ENCODE measurements at regions of chr17 and their contacts with region 1.

Region 1: DNA sequence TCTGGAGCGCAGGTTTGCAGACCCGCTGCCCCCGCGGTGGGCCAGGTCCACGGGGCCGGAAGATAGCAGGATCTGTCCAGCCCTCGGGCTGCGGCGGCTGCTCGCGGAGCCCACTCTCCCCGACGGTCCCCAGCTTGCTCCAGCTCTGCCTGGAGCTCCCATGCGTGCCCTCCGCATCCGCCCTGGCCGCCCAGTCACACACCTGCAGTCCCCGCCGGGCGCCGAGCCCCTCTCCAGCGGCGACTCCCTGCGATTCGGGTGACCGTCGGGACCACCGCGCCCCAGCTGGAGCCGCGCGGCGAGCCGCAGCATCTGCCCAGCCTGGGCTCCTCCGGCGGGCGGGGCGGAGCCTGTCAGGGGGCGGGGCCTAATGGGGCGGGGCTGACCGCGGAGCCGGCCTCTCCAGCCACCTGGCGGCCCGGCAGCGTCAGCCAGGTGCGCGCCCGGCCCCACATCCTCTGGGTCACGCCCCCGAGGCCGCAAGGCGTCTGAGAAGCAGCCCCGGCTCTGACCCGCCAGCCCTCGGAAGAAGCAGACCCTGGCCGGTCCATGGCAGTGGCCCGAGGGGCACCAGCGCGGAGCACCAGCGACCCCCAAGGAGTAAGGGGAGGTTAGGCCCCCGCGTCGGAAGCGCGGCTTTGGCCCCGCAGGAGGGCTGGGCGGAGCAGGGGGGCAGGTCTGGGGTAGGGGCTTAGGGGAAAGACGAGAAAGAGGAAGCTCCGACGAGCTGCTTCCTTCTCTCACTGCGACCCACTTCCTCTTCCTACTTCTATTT is at the start of gene PIK3R5:
- DNase-seq: peak; percentile 91
- H3K4me3 Mint-ChIP-seq: peak within 1 kb of the TSS; percentile 93
- H3K27ac Mint-ChIP-seq: peak within 1 kb of the TSS; percentile 96
- H3K4me1 Mint-ChIP-seq: peaks cover 49% of the 10 kb centered on the region
- H3K27me3 Mint-ChIP-seq: no peaks in the 10 kb centered on the region
- total RNA-seq, gene PIK3R5: 32.6 and 36.8 TPM in 2 replicates

Region 2: DNA sequence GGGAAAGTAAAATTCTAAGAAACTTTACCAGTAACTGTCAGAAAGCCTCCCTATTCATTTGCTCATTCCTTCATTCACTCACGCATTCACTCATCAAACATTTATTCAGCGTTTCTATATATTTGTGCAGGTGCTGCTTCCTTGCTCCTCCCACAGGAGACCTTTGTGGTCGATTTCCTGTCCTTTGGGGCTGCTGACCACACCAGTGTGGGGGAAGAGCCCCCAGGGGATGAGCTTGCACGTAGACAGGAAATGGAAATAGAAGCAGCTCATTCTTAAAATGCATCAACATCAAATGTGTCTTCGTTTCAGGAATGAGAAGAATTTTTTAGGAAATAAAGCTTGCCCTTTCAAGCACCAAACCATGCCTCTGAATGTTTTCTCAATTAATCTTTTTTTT is 107.7 kb before region 1 on chr17:
- intact Hi-C with region 1: loop called (anchors 2 kb)
- DNase-seq: peak; percentile 87
- H3K4me3 Mint-ChIP-seq: peak overlapping the region; percentile 67
- H3K27ac Mint-ChIP-seq: peak overlapping the region; percentile 91
- H3K4me1 Mint-ChIP-seq: peaks cover 56% of the 10 kb centered on the region
- H3K27me3 Mint-ChIP-seq: no peaks in the 10 kb centered on the region

Region 3: GRCh38 chr17:8880476-8881036 is 85.0 kb before region 1 on chr17:
- intact Hi-C with region 1: no loop called
- DNase-seq: no peak
- H3K4me3 Mint-ChIP-seq: no peak overlapping the region
- H3K27ac Mint-ChIP-seq: no peak overlapping the region
- H3K4me1 Mint-ChIP-seq: peaks cover 2% of the 10 kb centered on the region
- H3K27me3 Mint-ChIP-seq: no peaks in the 10 kb centered on the region

Region 4: DNA sequence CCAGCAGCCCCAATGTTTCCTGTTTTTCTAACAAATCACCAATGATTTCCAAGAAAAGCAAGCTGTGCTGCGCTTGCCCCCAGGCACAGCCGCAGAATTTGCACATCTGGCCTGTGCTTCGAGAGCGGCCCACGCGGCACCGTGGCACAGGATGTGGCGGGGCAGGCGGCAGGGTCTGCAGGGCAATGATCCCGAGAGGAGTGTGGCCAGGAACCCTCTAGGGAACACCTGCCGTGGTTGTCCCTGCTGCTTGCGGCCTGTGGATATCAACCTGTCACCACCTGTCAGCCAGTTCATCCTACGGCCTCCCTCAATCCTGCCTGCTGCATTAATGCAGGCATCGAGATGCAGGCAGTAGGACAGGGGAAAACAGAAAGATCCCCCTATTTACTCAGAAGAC is 24.1 kb before region 1 on chr17:
- intact Hi-C with region 1: loop called (anchors 1 kb)
- DNase-seq: peak; percentile 92
- H3K4me3 Mint-ChIP-seq: peak overlapping the region; percentile 79
- H3K27ac Mint-ChIP-seq: peak overlapping the region; percentile 98
- H3K4me1 Mint-ChIP-seq: peaks cover 68% of the 10 kb centered on the region
- H3K27me3 Mint-ChIP-seq: no peaks in the 10 kb centered on the region

Measured in activated CD4-positive, alpha-beta T cell treated with anti-CD3 and anti-CD28 coated beads, Interleukin-2, amount 10 ng/mL, durations not matched to agents 24 days and 14 days (primary cell).